ENCODE measurements at regions of chr2 and their contacts with region 1.

Region 1: DNA sequence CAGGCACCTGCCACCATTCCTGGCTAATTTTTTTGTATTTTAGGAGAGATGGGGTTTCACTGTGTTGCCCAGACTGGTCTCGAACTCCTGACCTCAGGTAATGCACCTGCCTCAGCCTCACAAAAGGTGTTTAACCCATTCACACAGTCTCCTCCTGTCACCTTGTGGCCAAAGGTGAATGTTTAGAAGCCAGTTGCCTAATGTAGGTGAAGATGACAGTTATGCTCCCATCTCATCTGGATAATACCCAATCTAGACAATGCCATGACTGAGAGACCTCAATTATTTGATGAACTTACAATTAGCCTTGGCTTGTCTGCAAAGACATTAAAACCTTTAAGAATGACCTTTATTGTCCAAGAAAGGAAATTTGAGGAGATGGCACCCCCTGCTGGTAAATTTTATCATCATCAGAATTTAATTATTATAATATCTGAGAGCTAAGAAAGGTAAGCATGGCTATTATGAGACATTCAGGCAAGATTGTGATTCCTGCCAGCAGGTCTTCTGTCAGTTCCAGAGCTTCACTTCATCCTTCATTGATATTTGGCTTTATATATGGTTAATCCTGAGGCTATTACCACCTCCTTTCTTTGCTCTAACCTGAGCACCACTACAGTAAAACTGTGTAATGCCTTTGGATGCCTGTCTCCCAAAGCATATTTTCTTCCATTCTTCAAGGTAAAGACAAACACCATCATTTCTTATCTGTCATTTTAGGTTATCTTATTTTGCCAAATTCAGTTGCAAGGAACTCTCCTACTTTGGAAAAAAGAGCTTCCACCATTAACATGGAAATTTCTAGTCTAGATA is 117.6 kb downstream of the FAM124B start:
- DNase-seq: peak; percentile 51

Region 2: DNA sequence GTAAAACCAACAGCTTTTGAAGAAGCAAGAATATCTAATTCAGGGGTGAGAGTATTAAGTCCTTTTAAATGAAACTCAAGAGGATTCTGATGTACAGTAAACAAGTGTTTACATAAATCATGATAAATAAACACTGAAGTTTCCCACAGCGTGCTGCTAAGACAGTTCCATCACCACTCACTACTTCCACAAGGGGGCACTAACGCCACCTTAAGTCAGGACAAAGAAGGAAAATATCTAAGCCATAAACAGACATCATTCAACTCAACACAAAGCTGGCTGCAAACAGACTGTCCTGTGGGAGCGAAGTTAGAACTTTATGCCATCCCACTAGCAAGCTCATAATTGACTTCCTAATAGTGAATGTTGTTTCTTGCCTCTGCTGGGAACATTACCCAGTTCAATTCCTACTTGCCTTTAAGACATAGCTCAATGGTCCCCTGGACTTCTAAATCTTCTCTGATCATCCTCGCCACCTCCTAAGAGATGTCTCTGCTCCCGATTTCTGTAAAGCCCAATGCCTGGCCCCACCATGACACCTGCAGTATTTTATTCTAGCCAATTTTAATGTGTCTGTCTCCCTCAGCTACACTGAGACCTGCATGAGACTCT is 290.6 kb before region 1 on chr2:
- in situ Hi-C with region 1: loop called (anchors 25 kb)
- DNase-seq: peak; percentile 65